Activated CD4-positive, alpha-beta T cell treated with anti-CD3 and anti-CD28 coated beads for 36 hours (primary cell): ENCODE measurements at regions of chr5 and their contacts with region 1.

Region 1: GRCh38 chr5:41903892-41904799 is at the start of gene RIMOC1:
- DNase-seq: peak; percentile 98
- ATAC-seq: peak; percentile 97
- H3K4me3 Mint-ChIP-seq: peak within 1 kb of the TSS; percentile 91
- H3K27ac Mint-ChIP-seq: peak within 1 kb of the TSS; percentile 98
- H3K4me1 Mint-ChIP-seq: peaks cover 47% of the 10 kb centered on the region
- H3K27me3 Mint-ChIP-seq: no peaks in the 10 kb centered on the region
- total RNA-seq, gene RIMOC1: 25.4 to 26.7 TPM

Region 2: GRCh38 chr5:41748631-41749030 is 155.5 kb before region 1 on chr5:
- CTCF ChIA-PET with region 1: no interaction called
- POLR2A ChIA-PET with region 1: no interaction called
- intact Hi-C with region 1: loop called in 1 of 2 experiments (anchors 5 kb)
- DNase-seq: peak; percentile 59
- ATAC-seq: peak; percentile 94
- H3K4me3 Mint-ChIP-seq: no peak overlapping the region
- H3K27ac Mint-ChIP-seq: no peak overlapping the region
- H3K4me1 Mint-ChIP-seq: peaks cover 28% of the 10 kb centered on the region
- H3K27me3 Mint-ChIP-seq: no peaks in the 10 kb centered on the region

Region 3: GRCh38 chr5:41869739-41870626 is 34.2 kb before region 1 on chr5 and contains the start of gene OXCT1:
- CTCF ChIA-PET with region 1: interaction called, 5 read pairs
- POLR2A ChIA-PET with region 1: interaction called, 15 read pairs
- intact Hi-C with region 1: loop called (anchors 1 kb)
- DNase-seq: peak; percentile 96
- ATAC-seq: peak; percentile 92
- H3K4me3 Mint-ChIP-seq: peak within 1 kb of the TSS; percentile 91
- H3K27ac Mint-ChIP-seq: peak within 1 kb of the TSS; percentile 94
- H3K4me1 Mint-ChIP-seq: peaks cover 54% of the 10 kb centered on the region
- H3K27me3 Mint-ChIP-seq: no peaks in the 10 kb centered on the region
- total RNA-seq, gene OXCT1: 70.3 to 91.4 TPM

Region 4: GRCh38 chr5:41885286-41885685 is 18.9 kb before region 1 on chr5:
- CTCF ChIA-PET with region 1: no interaction called
- POLR2A ChIA-PET with region 1: interaction called, 11 read pairs
- intact Hi-C with region 1: no loop called
- DNase-seq: no peak
- ATAC-seq: no peak
- H3K4me3 Mint-ChIP-seq: no peak overlapping the region
- H3K27ac Mint-ChIP-seq: no peak overlapping the region
- H3K4me1 Mint-ChIP-seq: no peaks in the 10 kb centered on the region
- H3K27me3 Mint-ChIP-seq: peaks cover 7% of the 10 kb centered on the region

Region 5: DNA sequence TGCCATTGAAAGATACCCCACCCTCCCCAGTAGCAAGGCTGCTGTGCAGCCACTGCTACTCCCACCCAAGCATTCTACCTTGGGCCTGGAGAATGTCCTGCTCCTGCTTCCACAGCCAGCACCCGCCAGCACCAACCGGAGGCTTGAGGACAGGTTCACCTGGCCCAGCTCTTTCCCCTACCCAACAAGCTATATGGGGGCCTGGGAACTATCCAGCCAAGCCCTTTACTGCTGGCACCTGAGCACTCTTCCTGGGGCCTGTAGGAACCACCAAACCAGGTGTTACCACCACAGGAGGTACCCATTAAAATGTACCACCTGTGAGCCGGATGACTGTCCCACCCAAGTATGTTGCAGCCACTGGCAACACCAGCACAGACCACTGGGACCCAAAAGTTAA is 433.0 kb after region 1 on chr5:
- CTCF ChIA-PET with region 1: no interaction called
- POLR2A ChIA-PET with region 1: no interaction called
- intact Hi-C with region 1: no loop called
- DNase-seq: no peak
- ATAC-seq: no peak
- H3K4me3 Mint-ChIP-seq: no peak overlapping the region
- H3K27ac Mint-ChIP-seq: no peak overlapping the region
- H3K4me1 Mint-ChIP-seq: no peaks in the 10 kb centered on the region
- H3K27me3 Mint-ChIP-seq: no peaks in the 10 kb centered on the region